SK-N-SH (cell line): ENCODE measurements at regions of chr19 and their contacts with region 1.

Region 1: GRCh38 chr19:14117668-14118164 is at the start of gene PRKACA:
- DNase-seq: peak; percentile 99
- H3K4me3 ChIP-seq: peak within 1 kb of the TSS; percentile 79 to 80
- H3K27ac ChIP-seq: peak within 1 kb of the TSS; percentile 70 to 98
- H3K4me1 ChIP-seq: peaks cover 15 to 36% of the 10 kb centered on the region in 2 experiments
- H3K27me3 ChIP-seq: no peaks in the 10 kb centered on the region
- CTCF ChIP-seq: no peak
- EP300 ChIP-seq: no peak
- RAD21 ChIP-seq: no peak
- polyA plus RNA-seq, gene PRKACA: 17.2 and 48.4 TPM in 2 replicates

Region 2: GRCh38 chr19:14091081-14091812 is 26.5 kb before region 1 on chr19:
- CTCF ChIA-PET with region 1: interaction called, 19 read pairs
- POLR2A ChIA-PET with region 1: no interaction called
- DNase-seq: peak; percentile 93
- H3K4me3 ChIP-seq: peak overlapping the region; percentile 79 to 91
- H3K27ac ChIP-seq: peak overlapping the region; percentile 67 to 92; a peak in 3 of 4 replicates
- H3K4me1 ChIP-seq: peaks cover 0 to 10% of the 10 kb centered on the region in 2 experiments; a peak in 1 of 4 replicates
- H3K27me3 ChIP-seq: no peaks in the 10 kb centered on the region
- CTCF ChIP-seq: peak; percentile 55
- EP300 ChIP-seq: no peak; a peak in 1 of 4 replicates
- RAD21 ChIP-seq: no peak